MCF 10A (cell line): ENCODE measurements at regions of chr20 and their contacts with region 1.

Region 1: GRCh38 chr20:50815162-50815989 is 20.5 kb downstream of the BCAS4 start:
- DNase-seq: no peak
- H3K4me3 Mint-ChIP-seq: no peak overlapping the region
- H3K27ac Mint-ChIP-seq: peak overlapping the region; percentile 52
- H3K4me1 Mint-ChIP-seq: peaks cover 16% of the 10 kb centered on the region
- H3K27me3 Mint-ChIP-seq: no peaks in the 10 kb centered on the region
- CTCF ChIP-seq: no peak

Region 2: DNA sequence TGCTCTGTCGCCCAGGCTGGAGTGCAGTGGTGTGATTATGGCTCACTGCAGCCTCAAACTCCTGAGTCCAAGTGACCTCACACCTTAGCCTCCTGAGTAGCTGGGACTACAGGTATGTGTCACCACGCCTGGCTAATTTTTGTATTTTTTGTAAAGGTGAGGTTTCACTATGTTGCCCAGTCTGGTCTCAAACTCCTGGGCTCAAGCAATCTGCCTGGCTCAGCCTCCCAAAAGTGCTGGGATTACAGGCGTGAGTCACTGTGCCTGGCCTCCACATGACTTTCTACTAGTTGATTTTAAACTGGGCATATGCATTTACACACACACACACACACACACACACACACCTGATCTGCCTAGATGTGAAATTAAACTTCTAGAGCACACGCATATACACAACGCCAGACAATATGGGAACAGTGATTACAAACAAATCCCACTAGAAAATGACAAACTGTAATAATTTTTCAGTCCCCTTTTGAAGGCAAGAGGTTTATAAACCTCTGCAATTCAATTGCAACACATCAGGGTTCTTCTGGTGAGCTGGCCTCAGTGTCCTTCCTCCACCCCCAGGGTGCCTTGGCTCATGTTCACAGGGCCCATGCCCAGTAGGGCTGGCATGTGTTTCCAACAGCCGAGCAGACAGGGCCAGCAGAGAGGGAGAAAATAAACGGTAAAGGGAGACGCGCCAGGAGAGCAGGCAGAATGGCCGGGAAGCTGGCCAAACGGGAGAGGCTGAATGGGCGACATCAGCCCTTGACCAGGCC is 52.8 kb before region 1 on chr20:
- CTCF ChIA-PET with region 1: no interaction called
- POLR2A ChIA-PET with region 1: no interaction called
- intact Hi-C with region 1: no loop called
- DNase-seq: peak; percentile 94
- H3K4me3 Mint-ChIP-seq: peak overlapping the region; percentile 61
- H3K27ac Mint-ChIP-seq: peak overlapping the region; percentile 89
- H3K4me1 Mint-ChIP-seq: peaks cover 27% of the 10 kb centered on the region
- H3K27me3 Mint-ChIP-seq: no peaks in the 10 kb centered on the region
- CTCF ChIP-seq: no peak

Region 3: GRCh38 chr20:50885781-50886486 is 70.6 kb after region 1 on chr20:
- CTCF ChIA-PET with region 1: interaction called, 10 read pairs
- POLR2A ChIA-PET with region 1: no interaction called
- intact Hi-C with region 1: loop called (anchors 5 kb)
- DNase-seq: no peak
- H3K4me3 Mint-ChIP-seq: no peak overlapping the region
- H3K27ac Mint-ChIP-seq: no peak overlapping the region
- H3K4me1 Mint-ChIP-seq: no peaks in the 10 kb centered on the region
- H3K27me3 Mint-ChIP-seq: no peaks in the 10 kb centered on the region
- CTCF ChIP-seq: no peak

Region 4: GRCh38 chr20:50891138-50891537 is 75.8 kb after region 1 on chr20:
- CTCF ChIA-PET with region 1: interaction called, 10 read pairs
- POLR2A ChIA-PET with region 1: interaction called, 4 read pairs
- intact Hi-C with region 1: loop called (anchors 5 kb)
- DNase-seq: no peak
- H3K4me3 Mint-ChIP-seq: no peak overlapping the region
- H3K27ac Mint-ChIP-seq: no peak overlapping the region
- H3K4me1 Mint-ChIP-seq: no peaks in the 10 kb centered on the region
- H3K27me3 Mint-ChIP-seq: no peaks in the 10 kb centered on the region
- CTCF ChIP-seq: no peak

Region 5: DNA sequence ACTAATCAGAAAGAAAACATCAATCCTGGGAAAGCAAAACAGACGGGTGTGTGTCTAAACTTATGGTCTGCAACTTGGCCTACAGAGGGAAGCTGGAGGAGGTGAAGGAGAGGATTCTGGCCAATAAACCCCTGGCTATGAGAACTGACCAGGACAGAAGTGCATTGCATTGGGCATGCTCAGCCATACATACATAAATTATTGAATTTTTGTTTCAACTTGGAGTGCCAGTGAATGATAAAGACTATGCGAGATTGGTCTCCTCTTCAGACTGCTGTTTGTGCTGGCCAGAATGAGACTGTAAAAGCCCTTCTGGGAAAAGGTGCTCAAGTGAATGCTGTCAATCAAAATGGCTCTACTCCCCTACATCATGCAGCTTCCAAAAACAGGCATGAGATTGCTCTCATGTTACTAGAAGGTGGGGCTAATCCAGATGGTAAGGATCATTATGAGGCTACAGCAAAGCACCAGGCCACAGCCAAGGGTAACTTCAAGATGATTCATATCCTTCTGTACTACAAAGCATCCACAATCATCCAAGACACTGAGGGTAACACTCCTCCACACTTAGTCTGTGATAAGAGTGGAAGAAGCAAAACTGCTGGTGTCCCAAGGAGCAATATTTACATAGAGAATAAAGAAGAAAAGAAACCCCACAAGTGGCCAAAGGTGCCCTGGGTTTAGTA is 98.5 kb after region 1 on chr20:
- CTCF ChIA-PET with region 1: interaction called, 12 read pairs
- POLR2A ChIA-PET with region 1: interaction called, 11 read pairs
- intact Hi-C with region 1: no loop called
- DNase-seq: peak; percentile 68
- H3K4me3 Mint-ChIP-seq: no peak overlapping the region
- H3K27ac Mint-ChIP-seq: peak overlapping the region; percentile 6
- H3K4me1 Mint-ChIP-seq: peaks cover 57% of the 10 kb centered on the region
- H3K27me3 Mint-ChIP-seq: no peaks in the 10 kb centered on the region
- CTCF ChIP-seq: no peak

Region 6: GRCh38 chr20:50919567-50919966 is 104.2 kb after region 1 on chr20:
- CTCF ChIA-PET with region 1: interaction called, 12 read pairs
- POLR2A ChIA-PET with region 1: interaction called, 11 read pairs
- intact Hi-C with region 1: no loop called
- DNase-seq: peak; percentile 96
- H3K4me3 Mint-ChIP-seq: peak overlapping the region; percentile 55
- H3K27ac Mint-ChIP-seq: peak overlapping the region; percentile 94
- H3K4me1 Mint-ChIP-seq: peaks cover 37% of the 10 kb centered on the region
- H3K27me3 Mint-ChIP-seq: no peaks in the 10 kb centered on the region
- CTCF ChIP-seq: no peak